ENCODE measurements at regions of chr1 and their contacts with region 1.

Region 1: DNA sequence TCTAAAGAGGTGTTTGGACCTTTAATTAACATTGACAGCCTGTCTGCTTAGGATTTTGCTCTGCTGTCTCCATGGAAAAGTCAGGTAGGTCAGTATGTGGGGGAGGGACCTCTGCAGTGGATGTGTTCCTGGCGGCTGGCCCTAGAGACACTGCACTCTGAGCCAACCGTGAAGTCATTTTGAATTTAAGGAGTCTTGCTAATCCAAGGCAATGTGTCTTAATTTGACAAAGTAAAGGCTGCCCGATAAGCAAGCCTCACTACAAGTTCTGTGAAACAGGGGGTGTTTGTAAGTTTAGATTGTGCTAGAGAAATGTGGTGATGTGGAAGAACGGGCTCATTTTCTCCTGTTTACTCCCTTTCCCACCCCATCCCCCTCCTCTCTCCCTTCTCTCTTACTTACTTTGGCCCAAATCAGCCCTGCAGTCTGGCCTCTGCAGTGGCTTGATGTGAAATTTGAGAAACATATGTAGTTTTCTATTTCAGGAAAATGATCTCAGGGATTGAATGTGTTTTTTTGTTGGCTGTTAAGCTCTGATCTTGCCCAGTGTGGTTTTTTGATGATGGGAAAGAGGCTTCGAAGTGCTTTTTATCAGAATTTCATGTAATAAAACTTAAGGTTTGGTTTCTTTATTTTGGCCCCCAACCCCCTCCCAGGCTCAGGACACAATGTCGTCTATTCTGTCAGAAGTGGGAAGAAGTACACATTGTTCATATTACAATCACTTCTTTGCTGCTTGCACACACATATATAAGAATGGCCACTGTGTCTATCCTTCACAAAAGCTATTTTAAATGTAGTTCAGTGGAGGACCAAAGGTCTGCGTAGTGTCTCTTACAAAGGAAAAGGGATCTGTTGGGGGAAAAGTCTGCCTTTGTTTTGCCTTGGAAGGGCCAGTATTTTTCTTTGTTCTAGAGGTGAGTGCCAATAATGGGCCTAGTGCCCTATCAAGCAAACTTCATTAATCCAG is 96.6 kb downstream of the FGGY start:
- DNase-seq: peak; percentile 64
- H3K4me3 ChIP-seq: no peak overlapping the region
- H3K27ac ChIP-seq: peak overlapping the region; percentile 77
- H3K4me1 ChIP-seq: no peaks in the 10 kb centered on the region
- H3K27me3 ChIP-seq: no peaks in the 10 kb centered on the region
- CTCF ChIP-seq: no peak
- POLR2A ChIP-seq: no peak

Region 2: DNA sequence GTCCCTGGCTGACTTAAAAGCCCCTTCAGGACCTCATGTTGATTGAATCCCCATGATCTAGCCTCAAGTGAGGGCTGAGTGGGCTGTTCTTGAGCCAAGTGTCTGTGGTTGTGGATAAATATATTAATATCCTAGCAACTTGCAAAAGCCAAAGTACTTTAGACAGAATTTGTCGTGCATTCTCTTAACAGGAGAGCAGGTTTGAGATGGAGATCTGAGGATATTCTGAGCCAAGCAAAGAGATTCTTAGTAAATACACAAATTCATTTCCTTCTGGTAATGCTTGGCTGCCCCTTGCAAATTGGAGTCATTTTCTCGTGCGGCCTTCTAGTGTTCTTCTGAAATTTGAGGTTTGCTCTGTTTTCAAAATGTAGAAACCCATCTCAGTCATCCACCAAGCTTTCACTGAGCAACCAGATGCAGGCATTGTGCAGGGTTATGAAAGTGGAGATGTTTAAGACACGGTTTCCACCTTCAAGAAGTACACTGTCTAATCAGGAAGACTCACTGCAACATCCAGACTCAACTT is 367.5 kb before region 1 on chr1:
- intact Hi-C with region 1: no loop called
- DNase-seq: no peak
- H3K4me3 ChIP-seq: no peak overlapping the region
- H3K27ac ChIP-seq: no peak overlapping the region
- H3K4me1 ChIP-seq: no peaks in the 10 kb centered on the region
- H3K27me3 ChIP-seq: no peaks in the 10 kb centered on the region
- CTCF ChIP-seq: no peak
- POLR2A ChIP-seq: no peak

Region 3: GRCh38 chr1:59446257-59446901 is 52.9 kb after region 1 on chr1:
- intact Hi-C with region 1: loop called (anchors 1 kb)
- DNase-seq: no peak
- H3K4me3 ChIP-seq: no peak overlapping the region
- H3K27ac ChIP-seq: peak overlapping the region in 1 of 2 donors; percentile 1
- H3K4me1 ChIP-seq: no peaks in the 10 kb centered on the region
- H3K27me3 ChIP-seq: no peaks in the 10 kb centered on the region
- CTCF ChIP-seq: no peak
- POLR2A ChIP-seq: no peak

Region 4: GRCh38 chr1:59511476-59512465 is 118.3 kb after region 1 on chr1:
- intact Hi-C with region 1: loop called (anchors 5 kb)
- DNase-seq: no peak
- H3K4me3 ChIP-seq: no peak overlapping the region
- H3K27ac ChIP-seq: no peak overlapping the region
- H3K4me1 ChIP-seq: no peaks in the 10 kb centered on the region
- H3K27me3 ChIP-seq: no peaks in the 10 kb centered on the region
- CTCF ChIP-seq: no peak
- POLR2A ChIP-seq: no peak

Region 5: GRCh38 chr1:59596441-59596861 is 203.0 kb after region 1 on chr1:
- intact Hi-C with region 1: loop called (anchors 2 kb)
- DNase-seq: peak; percentile 27
- H3K4me3 ChIP-seq: no peak overlapping the region
- H3K27ac ChIP-seq: peak overlapping the region; percentile 66 to 71
- H3K4me1 ChIP-seq: peaks cover 22% of the 10 kb centered on the region
- H3K27me3 ChIP-seq: no peaks in the 10 kb centered on the region
- CTCF ChIP-seq: no peak
- POLR2A ChIP-seq: no peak

Region 6: GRCh38 chr1:59682396-59683080 is 289.0 kb after region 1 on chr1:
- intact Hi-C with region 1: loop called (anchors 2 kb)
- DNase-seq: no peak
- H3K4me3 ChIP-seq: no peak overlapping the region
- H3K27ac ChIP-seq: peak overlapping the region; percentile 50 to 52
- H3K4me1 ChIP-seq: no peaks in the 10 kb centered on the region
- H3K27me3 ChIP-seq: no peaks in the 10 kb centered on the region
- CTCF ChIP-seq: no peak
- POLR2A ChIP-seq: no peak

Measured in prostate gland (tissue), 2 donors.